IMR-90 (cell line): ENCODE measurements at regions of chr9 and their contacts with region 1.

Region 1: DNA sequence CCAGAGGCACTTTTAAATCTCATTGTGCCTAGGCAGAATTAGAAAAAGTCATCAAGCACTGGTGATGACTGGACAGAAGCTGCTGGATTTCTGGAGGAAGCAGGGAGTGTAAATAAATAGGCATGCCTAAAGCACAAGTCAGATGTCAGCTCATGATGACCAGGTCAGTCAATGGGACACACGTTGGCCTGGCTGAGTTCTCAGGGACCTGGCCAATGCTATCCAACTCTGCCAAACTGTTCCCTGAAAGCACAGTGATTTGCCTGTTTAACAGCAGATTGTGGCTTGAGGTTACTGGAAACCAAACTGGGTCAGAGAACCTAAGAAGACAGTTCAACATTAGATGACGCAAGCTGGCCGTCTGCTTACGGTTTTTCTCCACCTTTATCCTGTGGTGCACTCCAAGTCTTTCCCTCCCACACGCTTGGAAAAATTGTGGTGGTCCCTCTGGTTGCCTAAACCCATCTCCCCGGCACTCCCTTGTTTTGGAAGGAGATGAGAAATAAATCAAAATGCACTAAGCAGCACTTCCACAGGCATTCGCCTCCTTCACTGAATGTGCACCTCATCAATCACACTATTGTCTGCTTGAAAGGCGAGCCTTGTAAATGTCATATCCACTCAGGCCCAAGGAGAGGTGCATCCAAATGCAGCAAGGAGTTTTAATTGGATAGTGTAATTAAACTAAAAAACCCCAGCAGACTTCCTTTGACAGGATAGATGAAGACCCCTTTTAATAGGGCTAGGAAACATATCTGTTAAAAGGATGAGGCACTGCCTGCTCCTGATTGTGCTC is 199.4 kb downstream of the GAPVD1 start:
- DNase-seq: peak; percentile 93
- ATAC-seq: peak; percentile 89
- H3K4me3 ChIP-seq: no peak overlapping the region
- H3K27ac ChIP-seq: peak overlapping the region; percentile 21
- H3K4me1 ChIP-seq: peaks cover 15% of the 10 kb centered on the region
- H3K27me3 ChIP-seq: no peaks in the 10 kb centered on the region
- CTCF ChIP-seq: no peak
- POLR2A ChIP-seq: no peak
- RAD21 ChIP-seq: no peak

Region 2: DNA sequence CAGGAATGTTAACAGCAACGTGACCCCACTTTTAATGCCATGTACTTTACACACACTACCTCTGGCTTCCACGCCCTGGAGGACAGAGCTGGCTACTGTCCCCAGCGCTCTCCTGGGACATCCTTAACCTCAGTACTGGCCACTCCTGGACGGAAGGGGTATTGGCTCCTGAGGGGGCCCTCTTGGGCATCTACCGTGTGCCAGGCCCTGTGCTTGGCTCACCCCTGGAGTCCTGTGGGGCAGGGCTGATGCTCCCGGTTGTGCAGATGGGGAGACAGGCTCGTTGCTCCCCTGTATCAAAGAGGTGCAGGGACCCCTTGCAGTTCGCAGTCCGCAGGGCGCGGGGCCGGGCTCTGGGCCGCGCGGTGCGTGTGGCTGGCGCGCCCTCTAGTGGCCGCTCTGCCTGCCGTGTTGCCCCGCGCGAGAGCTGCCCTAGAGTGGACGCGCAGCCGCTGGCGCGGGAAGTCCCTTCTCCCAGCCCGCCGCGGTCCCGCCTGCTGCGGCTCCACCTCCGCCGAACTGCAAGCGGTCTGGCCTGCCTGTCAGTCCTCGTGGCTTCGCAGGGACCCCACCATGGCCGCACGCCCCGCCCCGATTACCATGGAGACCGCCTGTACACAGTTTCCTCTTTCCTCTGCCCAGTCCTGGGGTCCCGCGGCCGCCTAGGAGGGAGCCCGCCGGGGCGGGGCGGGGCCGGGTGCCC is 608.1 kb before region 1 on chr9 and contains the start of gene WDR38:
- CTCF ChIA-PET with region 1: no interaction called
- POLR2A ChIA-PET with region 1: no interaction called
- dilution Hi-C with region 1: no loop called
- in situ Hi-C with region 1: no loop called
- intact Hi-C with region 1: no loop called
- DNase-seq: peak; percentile 66
- ATAC-seq: peak; percentile 88
- H3K4me3 ChIP-seq: peak within 1 kb of the TSS; percentile 43
- H3K27ac ChIP-seq: no peak within 1 kb of the TSS; the same call in 1 of the 2 replicates
- H3K4me1 ChIP-seq: no peaks in the 10 kb centered on the region
- H3K27me3 ChIP-seq: no peaks in the 10 kb centered on the region
- CTCF ChIP-seq: peak; percentile 84
- POLR2A ChIP-seq: peak; percentile 55; the same call in 1 of the 2 replicates
- RAD21 ChIP-seq: peak; percentile 87
- total RNA-seq, gene WDR38: not detected in 2 replicates

Region 3: GRCh38 chr9:125433461-125434011 is 27.5 kb before region 1 on chr9:
- CTCF ChIA-PET with region 1: no interaction called
- POLR2A ChIA-PET with region 1: no interaction called
- dilution Hi-C with region 1: no loop called
- in situ Hi-C with region 1: no loop called
- intact Hi-C with region 1: no loop called
- DNase-seq: no peak
- ATAC-seq: no peak
- H3K4me3 ChIP-seq: no peak overlapping the region
- H3K27ac ChIP-seq: no peak overlapping the region
- H3K4me1 ChIP-seq: no peaks in the 10 kb centered on the region
- H3K27me3 ChIP-seq: no peaks in the 10 kb centered on the region
- CTCF ChIP-seq: no peak
- POLR2A ChIP-seq: no peak
- RAD21 ChIP-seq: no peak

Region 4: DNA sequence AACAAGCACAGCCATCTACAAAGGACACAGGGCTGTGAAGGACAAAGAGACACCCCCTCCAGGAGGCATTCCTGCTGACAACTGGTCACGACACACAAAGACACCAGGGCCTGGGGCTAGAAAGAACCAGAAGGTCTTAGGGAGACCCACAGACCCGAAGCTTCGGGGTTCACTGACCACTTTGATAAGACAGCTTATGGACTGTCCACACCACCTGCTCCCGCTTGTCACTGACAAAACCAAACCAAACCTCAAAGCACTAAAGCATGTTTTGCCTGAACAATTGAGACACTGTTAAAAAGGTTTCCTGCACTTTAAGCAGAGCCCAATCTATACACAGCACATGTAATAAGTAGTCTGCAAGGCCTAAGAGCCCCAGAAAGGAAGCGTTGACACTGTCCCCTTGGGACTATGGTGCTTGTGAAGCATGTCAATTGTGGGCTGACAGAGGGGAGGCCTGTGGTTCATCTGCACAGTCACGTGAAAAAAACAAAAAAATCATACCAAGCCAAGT is 14.4 kb before region 1 on chr9:
- CTCF ChIA-PET with region 1: no interaction called
- POLR2A ChIA-PET with region 1: no interaction called
- dilution Hi-C with region 1: no loop called
- in situ Hi-C with region 1: no loop called
- intact Hi-C with region 1: no loop called
- DNase-seq: no peak
- ATAC-seq: no peak
- H3K4me3 ChIP-seq: no peak overlapping the region
- H3K27ac ChIP-seq: no peak overlapping the region
- H3K4me1 ChIP-seq: no peaks in the 10 kb centered on the region
- H3K27me3 ChIP-seq: no peaks in the 10 kb centered on the region
- CTCF ChIP-seq: no peak
- POLR2A ChIP-seq: no peak
- RAD21 ChIP-seq: no peak

Region 5: DNA sequence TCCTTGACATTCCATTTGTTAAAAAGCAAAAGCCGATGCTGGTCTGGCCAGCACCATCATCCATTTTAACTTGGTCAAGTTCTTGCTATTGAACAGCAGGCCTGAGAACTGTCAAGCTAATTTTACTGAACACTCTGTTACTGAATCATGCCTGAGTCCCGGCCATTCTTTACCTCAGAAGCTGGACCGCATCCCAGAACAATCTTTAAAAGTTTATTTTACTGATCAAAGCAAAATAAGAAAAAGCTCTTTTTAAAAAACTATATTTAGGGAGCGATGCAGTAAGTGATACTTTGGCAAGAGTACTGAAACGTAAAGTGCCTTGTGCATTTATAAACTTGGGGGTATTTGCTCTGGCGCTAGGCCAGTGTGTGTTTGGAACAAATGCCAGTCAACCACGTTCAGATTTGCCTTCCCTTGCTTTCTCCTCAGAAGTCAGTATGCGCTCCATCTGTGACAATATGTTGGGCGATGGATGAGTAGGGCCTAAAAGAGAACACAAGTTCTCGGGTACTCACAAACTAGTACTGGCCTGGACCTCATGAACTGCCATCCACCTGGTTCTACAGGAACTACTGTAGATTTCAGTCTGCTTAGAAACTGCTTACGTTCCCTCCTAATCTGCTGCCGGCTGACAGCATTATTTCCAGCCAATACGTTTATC is 84.1 kb after region 1 on chr9:
- CTCF ChIA-PET with region 1: no interaction called
- POLR2A ChIA-PET with region 1: no interaction called
- dilution Hi-C with region 1: no loop called
- in situ Hi-C with region 1: no loop called
- intact Hi-C with region 1: loop called (anchors 5 kb)
- DNase-seq: peak; percentile 89
- ATAC-seq: peak; percentile 92
- H3K4me3 ChIP-seq: no peak overlapping the region
- H3K27ac ChIP-seq: peak overlapping the region; percentile 74; the same call in 1 of the 2 replicates
- H3K4me1 ChIP-seq: peaks cover 16% of the 10 kb centered on the region
- H3K27me3 ChIP-seq: no peaks in the 10 kb centered on the region
- CTCF ChIP-seq: no peak
- POLR2A ChIP-seq: no peak
- RAD21 ChIP-seq: no peak